ENCODE measurements at regions of chr1 and their contacts with region 1.

Region 1: GRCh38 chr1:153494976-153495535 is 34.6 kb upstream of the S100A7 start:
- DNase-seq: peak; percentile 99
- ATAC-seq: peak; percentile 96
- H3K4me3 Mint-ChIP-seq: no peak overlapping the region
- H3K27ac Mint-ChIP-seq: peak overlapping the region; percentile 56; the same call in 1 of the 2 replicates
- H3K4me1 Mint-ChIP-seq: peaks cover 23% of the 10 kb centered on the region
- H3K27me3 Mint-ChIP-seq: no peaks in the 10 kb centered on the region; the same call in 1 of the 2 replicates
- CTCF ChIP-seq: peak; percentile 95

Region 2: DNA sequence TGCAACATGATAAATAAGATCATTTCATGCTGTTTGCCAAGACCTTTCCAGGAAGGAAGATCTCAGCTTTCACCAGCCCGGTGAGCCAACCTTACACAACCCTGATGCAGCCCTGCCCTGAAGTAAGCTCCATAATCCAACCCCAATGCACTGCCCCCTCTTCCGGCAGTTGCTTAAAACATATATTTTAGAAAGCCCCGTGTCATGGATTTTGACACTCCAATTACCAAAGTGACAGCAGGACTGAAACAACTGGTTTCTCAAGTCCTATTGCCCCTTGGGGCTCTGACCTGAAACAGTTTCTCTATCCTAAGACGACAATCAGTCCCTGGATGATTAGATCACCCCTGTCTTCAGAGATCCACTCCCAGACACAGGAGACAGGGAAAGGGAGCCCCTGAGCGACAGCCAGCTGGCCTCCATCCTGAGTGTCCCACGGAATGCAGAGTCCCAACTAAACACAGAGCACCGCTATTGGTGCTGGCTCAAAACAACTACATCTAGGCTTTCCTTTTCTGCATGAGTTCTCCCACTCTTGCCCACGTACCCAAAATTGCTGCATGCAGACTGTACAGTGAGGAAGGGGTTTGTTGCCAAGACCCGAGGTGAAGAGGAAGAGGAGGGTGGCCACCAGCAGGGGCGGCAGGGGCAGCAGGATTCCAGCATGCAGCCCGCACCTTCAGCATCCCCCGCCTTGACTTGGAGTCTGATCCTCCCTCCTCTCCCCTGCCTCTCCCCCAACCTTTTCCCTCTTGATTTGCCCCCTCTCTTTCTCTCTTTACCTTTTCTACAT is 129.6 kb before region 1 on chr1:
- CTCF ChIA-PET with region 1: interaction called, 32 read pairs
- POLR2A ChIA-PET with region 1: no interaction called
- DNase-seq: no peak
- ATAC-seq: no peak
- H3K4me3 Mint-ChIP-seq: no peak overlapping the region
- H3K27ac Mint-ChIP-seq: no peak overlapping the region
- H3K4me1 Mint-ChIP-seq: no peaks in the 10 kb centered on the region
- H3K27me3 Mint-ChIP-seq: peaks cover 3% of the 10 kb centered on the region
- CTCF ChIP-seq: no peak

Region 3: GRCh38 chr1:153397051-153397926 is 97.8 kb before region 1 on chr1:
- CTCF ChIA-PET with region 1: interaction called, 45 read pairs
- POLR2A ChIA-PET with region 1: interaction called, 5 read pairs
- DNase-seq: no peak
- ATAC-seq: no peak
- H3K4me3 Mint-ChIP-seq: no peak overlapping the region
- H3K27ac Mint-ChIP-seq: no peak overlapping the region
- H3K4me1 Mint-ChIP-seq: peaks cover 6% of the 10 kb centered on the region
- H3K27me3 Mint-ChIP-seq: peaks cover 3% of the 10 kb centered on the region; the same call in 1 of the 2 replicates
- CTCF ChIP-seq: no peak

Region 4: GRCh38 chr1:153465811-153466636 is 29.0 kb before region 1 on chr1:
- CTCF ChIA-PET with region 1: interaction called, 85 read pairs
- POLR2A ChIA-PET with region 1: interaction called, 7 read pairs
- DNase-seq: peak; percentile 82
- ATAC-seq: peak; percentile 82
- H3K4me3 Mint-ChIP-seq: peak overlapping the region; percentile 41
- H3K27ac Mint-ChIP-seq: peak overlapping the region; percentile 48; the same call in 1 of the 2 replicates
- H3K4me1 Mint-ChIP-seq: peaks cover 29% of the 10 kb centered on the region
- H3K27me3 Mint-ChIP-seq: peaks cover 11% of the 10 kb centered on the region
- CTCF ChIP-seq: peak; percentile 88

Region 5: GRCh38 chr1:153510984-153511410 is 15.9 kb after region 1 on chr1:
- CTCF ChIA-PET with region 1: interaction called, 33 read pairs
- POLR2A ChIA-PET with region 1: no interaction called
- DNase-seq: peak; percentile 93
- ATAC-seq: peak; percentile 96
- H3K4me3 Mint-ChIP-seq: no peak overlapping the region
- H3K27ac Mint-ChIP-seq: no peak overlapping the region
- H3K4me1 Mint-ChIP-seq: peaks cover 5% of the 10 kb centered on the region; the same call in 1 of the 2 replicates
- H3K27me3 Mint-ChIP-seq: peaks cover 38% of the 10 kb centered on the region
- CTCF ChIP-seq: peak; percentile 81

Region 6: GRCh38 chr1:153532769-153533599 is 37.9 kb after region 1 on chr1:
- CTCF ChIA-PET with region 1: interaction called, 20 read pairs
- POLR2A ChIA-PET with region 1: no interaction called
- DNase-seq: peak; percentile 94
- ATAC-seq: peak; percentile 85
- H3K4me3 Mint-ChIP-seq: peak overlapping the region; percentile 63
- H3K27ac Mint-ChIP-seq: peak overlapping the region; percentile 85
- H3K4me1 Mint-ChIP-seq: peaks cover 44% of the 10 kb centered on the region
- H3K27me3 Mint-ChIP-seq: peaks cover 37% of the 10 kb centered on the region
- CTCF ChIP-seq: peak; percentile 72

Region 7: DNA sequence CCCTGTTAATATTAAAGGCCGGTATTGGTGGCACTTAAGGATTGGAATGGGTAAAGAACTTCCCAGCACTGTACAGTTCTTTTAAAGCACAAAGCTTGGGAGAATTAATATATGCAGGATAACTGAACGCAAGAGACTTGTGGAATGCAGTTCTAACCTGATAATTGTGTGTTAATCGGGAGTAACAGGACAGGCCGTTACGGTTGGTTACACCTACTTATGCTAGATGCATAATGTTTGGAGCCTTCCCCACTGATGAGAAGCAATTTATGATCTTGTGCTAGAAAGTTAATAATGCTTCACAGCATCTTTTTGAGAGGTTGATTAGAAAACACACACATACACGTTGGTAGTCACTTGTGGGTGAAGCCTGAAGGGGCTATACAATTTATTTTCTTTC is 145.8 kb after region 1 on chr1:
- CTCF ChIA-PET with region 1: no interaction called
- POLR2A ChIA-PET with region 1: no interaction called
- DNase-seq: no peak
- ATAC-seq: no peak
- H3K4me3 Mint-ChIP-seq: no peak overlapping the region
- H3K27ac Mint-ChIP-seq: no peak overlapping the region
- H3K4me1 Mint-ChIP-seq: 0 out of 2 replicates have a peak, but pooled peaks cover 4% of the 10 kb centered on the region
- H3K27me3 Mint-ChIP-seq: no peaks in the 10 kb centered on the region
- CTCF ChIP-seq: no peak

Measured in WTC11 (cell line).